ENCODE measurements at regions of chr2 and their contacts with region 1.

Region 1: DNA sequence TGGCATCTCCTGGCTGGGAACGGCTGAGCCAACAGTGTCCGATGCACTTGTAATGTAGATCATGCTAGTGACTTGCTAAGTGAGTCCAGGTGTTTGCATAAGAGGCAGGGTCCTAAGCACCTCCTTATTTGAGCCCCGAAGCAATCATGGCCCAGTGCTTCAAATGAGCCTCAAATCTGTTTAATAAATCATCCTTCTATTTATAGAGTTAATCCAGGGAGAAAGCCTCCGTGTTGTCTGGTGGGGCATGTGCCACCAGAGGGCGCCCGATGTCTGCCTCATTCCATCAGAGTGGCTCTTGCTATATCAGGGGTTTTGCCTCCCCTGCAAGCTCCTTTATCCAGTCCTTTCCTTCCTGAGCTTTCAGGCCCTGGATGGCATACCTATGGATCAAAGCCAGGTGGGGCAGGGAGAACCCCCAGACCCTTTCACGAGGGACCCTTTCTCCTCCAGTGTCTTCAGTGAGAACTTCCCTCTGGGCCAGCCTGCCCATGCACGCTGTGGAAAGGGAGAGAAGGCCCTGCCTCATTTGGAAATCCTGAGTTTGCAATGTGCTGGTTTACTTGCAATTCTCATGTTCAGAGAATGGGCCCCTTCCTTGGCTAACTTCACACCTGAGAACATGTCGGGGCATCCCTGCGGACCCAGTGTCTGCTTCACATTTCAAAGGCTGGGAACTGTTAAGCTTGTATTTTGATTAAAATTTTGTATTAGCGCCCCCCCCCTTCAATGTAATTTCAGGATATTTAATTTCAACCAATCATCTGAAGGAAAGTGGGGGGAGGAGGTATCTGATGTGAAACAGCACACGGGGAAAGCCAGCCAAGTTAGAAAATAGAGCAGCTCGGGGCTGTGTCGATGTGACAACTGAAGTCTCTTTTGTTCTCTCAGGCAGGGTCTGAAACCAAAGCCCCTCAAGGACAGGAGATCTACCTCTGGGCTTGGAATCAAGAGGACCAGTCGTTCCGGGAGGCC is 39.7 kb downstream of the RDH14 start:
- DNase-seq: peak; percentile 85
- ATAC-seq: peak; percentile 75
- H3K4me3 Mint-ChIP-seq: no peak overlapping the region
- H3K27ac Mint-ChIP-seq: no peak overlapping the region
- H3K4me1 Mint-ChIP-seq: no peaks in the 10 kb centered on the region
- H3K27me3 Mint-ChIP-seq: peaks cover 11% of the 10 kb centered on the region

Region 2: GRCh38 chr2:18491577-18491976 is 29.2 kb before region 1 on chr2:
- CTCF ChIA-PET with region 1: no interaction called
- POLR2A ChIA-PET with region 1: no interaction called
- intact Hi-C with region 1: no loop called
- DNase-seq: no peak
- ATAC-seq: no peak
- H3K4me3 Mint-ChIP-seq: no peak overlapping the region
- H3K27ac Mint-ChIP-seq: no peak overlapping the region
- H3K4me1 Mint-ChIP-seq: no peaks in the 10 kb centered on the region
- H3K27me3 Mint-ChIP-seq: peaks cover 25% of the 10 kb centered on the region

Region 3: DNA sequence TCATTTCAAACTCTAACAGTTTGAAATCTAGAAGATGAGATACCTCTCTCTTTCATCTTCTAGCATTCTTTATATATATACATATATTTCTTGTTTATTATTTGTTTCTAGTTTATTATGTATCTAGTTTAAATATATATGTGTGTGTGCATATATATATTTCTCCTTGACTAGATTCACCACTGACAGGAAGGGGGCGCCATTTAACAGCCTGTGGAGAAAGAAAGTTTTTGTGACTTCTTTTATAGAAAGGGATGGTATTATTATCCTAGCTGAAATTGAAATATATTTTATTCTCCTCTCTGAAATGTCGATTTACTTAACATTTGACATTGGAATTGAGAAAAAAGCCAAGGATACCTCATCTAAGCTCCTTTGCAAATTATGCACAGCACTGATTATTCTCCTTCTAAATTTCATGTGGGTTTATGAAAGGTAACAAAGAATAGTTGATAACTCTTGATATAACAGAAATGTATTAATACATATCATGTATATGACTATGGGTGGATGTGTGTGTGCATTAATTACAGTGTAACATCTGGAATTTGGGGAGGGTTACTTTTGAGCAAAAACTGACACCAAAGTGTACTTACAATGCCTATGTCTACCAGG is 229.3 kb after region 1 on chr2:
- CTCF ChIA-PET with region 1: interaction called, 6 read pairs
- POLR2A ChIA-PET with region 1: no interaction called
- intact Hi-C with region 1: loop called (anchors 5 to 10 kb)
- DNase-seq: peak; percentile 67
- ATAC-seq: no peak
- H3K4me3 Mint-ChIP-seq: no peak overlapping the region
- H3K27ac Mint-ChIP-seq: no peak overlapping the region
- H3K4me1 Mint-ChIP-seq: no peaks in the 10 kb centered on the region
- H3K27me3 Mint-ChIP-seq: no peaks in the 10 kb centered on the region

Measured in activated CD4-positive, alpha-beta T cell treated with anti-CD3 and anti-CD28 coated beads for 36 hours (primary cell).